Natural killer cell (primary cell): ENCODE measurements at regions of chr11 and their contacts with region 1.

Region 1: DNA sequence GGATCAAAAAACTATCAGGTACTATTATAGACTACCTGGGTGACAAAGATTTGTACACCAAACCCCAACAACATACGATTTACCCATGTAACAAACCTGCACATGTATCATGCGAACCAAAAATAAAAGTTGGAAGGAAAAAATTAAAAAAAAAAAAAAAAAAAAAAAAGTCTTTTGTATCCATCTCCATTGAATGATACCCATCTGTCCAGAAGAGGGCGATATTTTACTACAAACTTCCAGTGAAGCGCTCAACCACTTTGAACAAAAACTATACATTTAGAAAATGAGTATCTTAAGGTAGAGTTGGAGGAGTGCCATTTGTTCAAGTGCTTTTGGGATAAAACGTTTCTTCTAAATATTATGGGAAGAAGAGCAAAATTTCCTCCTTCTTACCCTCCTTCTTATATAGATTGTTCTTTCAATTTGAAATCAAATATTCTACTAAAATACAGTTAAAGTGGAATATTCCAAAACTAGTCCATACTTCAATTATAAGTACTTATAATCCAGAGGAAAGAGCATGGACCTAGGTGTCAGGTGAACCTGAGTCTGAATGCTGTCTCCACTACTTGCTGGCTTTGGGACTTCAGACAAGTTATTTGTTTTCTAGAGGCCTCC is 23.3 kb downstream of the ARL14EP start:
- DNase-seq: peak in 1 of 2 donors; percentile 76
- ATAC-seq: peak; percentile 64 to 79 (median 77)
- H3K4me3 ChIP-seq: no peak overlapping the region
- H3K4me3 Mint-ChIP-seq: no peak overlapping the region
- H3K27ac ChIP-seq: no peak overlapping the region
- H3K27ac Mint-ChIP-seq: no peak overlapping the region
- H3K4me1 ChIP-seq: peaks cover 3% of the 10 kb centered on the region
- H3K4me1 Mint-ChIP-seq: peaks cover 9 to 20% of the 10 kb centered on the region in 2 donors
- H3K27me3 ChIP-seq: no peaks in the 10 kb centered on the region
- H3K27me3 Mint-ChIP-seq: no peaks in the 10 kb centered on the region
- CTCF ChIP-seq: peak; percentile 81

Region 2: DNA sequence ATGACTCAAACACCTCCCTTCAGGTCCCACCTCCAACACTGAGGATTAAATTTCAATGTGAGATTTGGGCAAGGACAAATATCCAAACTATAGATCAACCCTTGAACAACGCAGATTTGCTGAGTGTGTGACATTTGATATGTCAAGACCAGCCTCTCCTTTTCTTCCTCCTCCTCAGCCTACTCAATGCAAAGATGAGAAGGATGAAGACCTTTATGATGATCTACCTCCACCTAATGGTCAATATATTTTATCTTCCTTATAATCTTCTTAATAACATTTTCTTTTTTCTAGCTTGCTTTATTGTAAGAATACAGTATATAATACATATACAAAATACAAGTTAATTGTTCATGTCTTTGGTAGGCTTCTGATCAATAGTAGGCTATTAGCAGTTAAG is 307.4 kb after region 1 on chr11:
- intact Hi-C with region 1: loop called (anchors 2 kb)
- DNase-seq: no peak
- ATAC-seq: no peak
- H3K4me3 ChIP-seq: no peak overlapping the region
- H3K4me3 Mint-ChIP-seq: no peak overlapping the region
- H3K27ac ChIP-seq: no peak overlapping the region
- H3K27ac Mint-ChIP-seq: no peak overlapping the region
- H3K4me1 ChIP-seq: no peaks in the 10 kb centered on the region
- H3K4me1 Mint-ChIP-seq: no peaks in the 10 kb centered on the region
- H3K27me3 ChIP-seq: no peaks in the 10 kb centered on the region
- H3K27me3 Mint-ChIP-seq: peaks cover 0 to 5% of the 10 kb centered on the region in 2 donors
- CTCF ChIP-seq: no peak

Region 3: DNA sequence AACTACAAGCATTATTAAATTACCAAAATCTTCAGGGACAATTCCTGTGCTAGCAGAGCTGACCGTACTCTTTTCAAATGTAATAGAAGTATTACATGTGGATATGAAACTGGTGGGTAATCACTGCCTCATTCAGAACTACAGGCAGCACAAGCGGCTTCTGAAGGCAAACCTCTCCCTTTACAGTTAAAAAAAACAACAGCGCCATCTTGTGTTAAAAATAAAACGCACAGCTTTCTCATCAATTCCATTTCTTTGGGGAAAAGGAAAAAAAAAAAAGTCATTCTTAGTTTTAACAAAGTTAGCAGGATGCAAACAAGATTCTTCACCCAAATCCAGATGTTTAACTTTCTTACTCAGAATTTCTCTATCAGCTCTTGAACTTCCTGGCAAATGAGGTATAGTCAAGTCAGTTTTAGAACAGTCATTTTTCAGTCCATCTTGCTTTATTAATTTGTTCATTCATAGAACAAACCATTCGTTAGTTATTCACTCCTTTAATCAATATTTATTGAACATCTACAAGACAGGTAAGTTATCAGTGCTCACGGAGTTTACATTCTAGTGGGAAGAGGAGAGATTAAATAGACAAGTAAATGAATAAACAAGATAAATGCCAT is 571.8 kb after region 1 on chr11:
- intact Hi-C with region 1: loop called (anchors 1 kb)
- DNase-seq: peak in 1 of 2 donors; percentile 25
- ATAC-seq: peak in 1 of 3 donors; percentile 47
- H3K4me3 ChIP-seq: no peak overlapping the region
- H3K4me3 Mint-ChIP-seq: no peak overlapping the region
- H3K27ac ChIP-seq: no peak overlapping the region
- H3K27ac Mint-ChIP-seq: no peak overlapping the region
- H3K4me1 ChIP-seq: no peaks in the 10 kb centered on the region
- H3K4me1 Mint-ChIP-seq: no peaks in the 10 kb centered on the region
- H3K27me3 ChIP-seq: no peaks in the 10 kb centered on the region
- H3K27me3 Mint-ChIP-seq: peaks cover 5 to 28% of the 10 kb centered on the region in 2 donors
- CTCF ChIP-seq: peak; percentile 41

Region 4: DNA sequence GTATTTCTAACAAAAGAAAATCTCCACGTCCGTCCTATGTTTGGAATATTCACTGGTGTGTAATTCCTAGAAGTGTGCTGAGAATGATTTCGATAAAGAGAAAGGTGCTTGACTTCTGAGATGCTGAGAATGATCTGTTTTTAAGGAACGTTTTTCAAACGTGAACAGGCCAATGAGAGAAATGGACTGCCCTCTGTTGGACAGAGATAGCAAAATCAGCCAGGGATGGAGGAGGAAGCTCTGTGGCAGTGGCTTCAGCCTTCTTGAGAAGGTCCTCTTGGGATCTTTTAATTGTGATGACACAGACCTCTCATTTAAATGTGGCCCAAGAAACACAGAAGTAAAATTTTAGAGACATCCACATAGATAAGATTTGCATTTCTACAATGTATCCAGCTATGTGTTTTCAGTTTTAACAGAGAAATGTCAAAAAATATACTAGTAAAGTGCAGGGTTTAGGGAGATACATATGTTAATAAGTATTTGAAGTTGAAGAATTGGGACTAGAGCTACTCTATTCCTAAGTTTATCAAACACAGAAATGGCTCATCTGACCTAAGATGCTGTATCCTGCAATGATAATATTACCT is 1660.7 kb after region 1 on chr11:
- intact Hi-C with region 1: loop called (anchors 5 kb)
- DNase-seq: peak in 1 of 2 donors; percentile 52
- ATAC-seq: peak; percentile 61 to 81 (median 67)
- H3K4me3 ChIP-seq: no peak overlapping the region
- H3K4me3 Mint-ChIP-seq: no peak overlapping the region
- H3K27ac ChIP-seq: no peak overlapping the region
- H3K27ac Mint-ChIP-seq: no peak overlapping the region
- H3K4me1 ChIP-seq: no peaks in the 10 kb centered on the region
- H3K4me1 Mint-ChIP-seq: no peaks in the 10 kb centered on the region
- H3K27me3 ChIP-seq: peaks cover 3% of the 10 kb centered on the region
- H3K27me3 Mint-ChIP-seq: peaks cover 31 to 63% of the 10 kb centered on the region in 2 donors
- CTCF ChIP-seq: peak; percentile 71